Dendritic cell treated with granulocyte-macrophage colony-stimulating factor and Interleukin-4, amounts not matched to agents 40 ng/mL and 50 ng/mL, for 4 days (primary cell): ENCODE measurements at regions of chr2 and their contacts with region 1.

Region 1: DNA sequence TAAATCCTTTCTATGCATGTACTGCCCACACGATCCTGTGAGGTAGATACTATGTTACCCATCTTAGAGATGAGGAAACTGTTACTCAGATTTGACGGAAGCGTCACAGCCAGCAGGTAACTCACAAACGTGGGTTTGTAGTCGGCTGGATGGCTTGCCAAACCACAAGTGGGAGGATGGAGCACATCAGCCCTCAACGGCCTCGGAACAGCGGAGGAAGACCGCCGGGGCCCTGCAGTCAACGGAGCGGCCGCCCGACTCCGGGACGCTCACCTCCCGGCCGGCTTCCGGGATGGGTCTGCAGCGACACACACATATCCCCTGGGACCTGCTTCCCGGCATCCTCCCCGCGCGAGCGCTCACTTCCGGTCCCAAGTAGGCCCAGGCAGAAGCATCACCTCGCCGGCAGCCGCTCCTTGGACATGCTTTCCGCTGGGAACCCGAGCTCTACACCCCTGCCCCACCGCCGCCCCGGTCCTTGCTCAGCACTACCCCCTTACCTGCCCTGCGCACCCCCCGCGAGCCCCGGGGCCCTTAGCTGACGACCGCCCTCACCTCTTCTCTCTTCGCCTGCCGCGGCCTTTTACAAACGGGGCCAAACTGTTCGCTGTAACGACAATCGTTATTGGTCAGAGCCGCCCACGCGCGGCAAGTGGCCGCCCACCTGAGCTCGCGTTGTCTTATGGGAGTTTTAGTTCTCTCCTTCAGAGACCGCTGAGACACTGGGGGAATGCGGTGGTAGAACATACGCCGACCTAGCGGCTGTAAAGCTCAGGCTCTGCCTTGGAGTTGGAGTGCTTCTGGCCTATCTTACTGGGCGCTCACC is at the start of gene C2orf42:
- H3K4me3 Mint-ChIP-seq: peak within 1 kb of the TSS; percentile 87
- H3K27ac Mint-ChIP-seq: peak within 1 kb of the TSS; percentile 98
- H3K4me1 Mint-ChIP-seq: peaks cover 19% of the 10 kb centered on the region
- H3K27me3 Mint-ChIP-seq: no peaks in the 10 kb centered on the region

Region 2: DNA sequence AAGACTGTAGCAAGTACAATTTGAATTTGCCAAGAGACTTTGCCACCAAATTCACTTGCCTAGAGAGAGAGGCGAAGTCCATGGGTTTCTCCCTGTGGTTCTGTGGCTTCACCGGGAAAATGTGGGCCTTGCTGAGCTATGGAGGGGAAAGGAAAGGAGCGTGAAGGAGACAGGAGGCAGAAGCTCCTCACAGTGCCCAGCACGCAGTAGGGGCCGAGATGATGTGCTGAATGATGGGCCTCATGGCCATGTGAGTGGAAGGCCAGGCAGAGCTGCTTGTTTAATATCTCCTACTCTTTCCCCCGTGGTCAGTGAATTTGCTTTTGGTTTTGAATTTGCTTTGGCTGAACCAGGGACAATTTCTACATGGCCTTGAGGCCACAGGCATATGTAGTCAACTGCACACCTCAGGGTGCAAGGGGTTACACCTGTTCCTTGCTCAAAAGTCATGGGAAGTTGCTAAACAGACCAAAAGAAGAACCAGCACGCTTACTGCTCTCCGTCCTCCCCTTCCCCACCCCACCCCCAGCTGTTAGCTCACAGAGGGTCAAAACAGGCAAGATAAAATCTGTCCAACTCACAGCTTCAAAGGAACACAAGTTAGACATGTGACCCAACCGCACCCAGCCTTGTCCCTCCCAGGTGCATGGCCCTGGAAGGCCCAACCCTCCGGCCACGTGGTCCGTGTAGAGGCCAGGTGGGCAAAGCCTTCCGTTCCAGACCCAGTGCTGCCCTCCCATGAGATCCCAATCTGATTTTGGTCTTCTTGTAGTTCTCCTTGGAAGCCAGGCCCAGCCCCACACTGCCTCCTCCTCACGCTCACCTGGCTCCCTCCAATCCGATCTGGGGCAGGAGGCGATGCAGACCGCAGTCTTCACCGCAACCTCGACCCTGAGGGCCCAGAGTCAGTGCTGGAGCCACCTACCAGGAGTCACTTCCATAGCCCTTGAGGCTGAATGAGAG is 214.8 kb before region 1 on chr2:
- intact Hi-C with region 1: no loop called
- H3K4me3 Mint-ChIP-seq: no peak overlapping the region
- H3K27ac Mint-ChIP-seq: peak overlapping the region; percentile 43
- H3K4me1 Mint-ChIP-seq: peaks cover 56% of the 10 kb centered on the region
- H3K27me3 Mint-ChIP-seq: no peaks in the 10 kb centered on the region

Region 3: DNA sequence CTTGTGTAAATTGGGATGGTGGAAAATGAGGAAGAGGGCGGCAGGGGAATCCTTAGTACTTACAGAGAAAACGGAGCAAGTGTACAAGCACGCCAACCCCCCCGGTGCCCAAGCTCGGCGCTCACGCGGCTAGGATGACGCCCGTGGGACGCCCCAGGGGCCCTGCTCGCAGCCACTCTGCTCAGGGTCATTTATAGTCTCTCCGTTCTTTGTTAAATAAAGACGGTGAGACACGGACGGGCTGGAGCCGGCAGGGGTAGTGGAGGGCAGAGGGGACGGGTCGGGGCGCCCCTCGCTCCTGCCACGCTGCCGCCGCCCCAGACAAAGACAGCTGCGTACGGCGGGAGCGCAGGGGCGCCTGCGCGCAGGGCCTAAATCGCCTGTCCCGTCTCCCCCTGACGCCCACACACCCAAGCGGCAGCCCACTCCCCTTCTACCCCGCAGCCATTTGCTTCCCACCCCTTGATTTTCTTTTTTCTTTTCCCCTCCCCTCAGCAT is 65.6 kb before region 1 on chr2:
- intact Hi-C with region 1: loop called (anchors 2 kb)
- H3K4me3 Mint-ChIP-seq: peak overlapping the region; percentile 74
- H3K27ac Mint-ChIP-seq: peak overlapping the region; percentile 100
- H3K4me1 Mint-ChIP-seq: peaks cover 85% of the 10 kb centered on the region
- H3K27me3 Mint-ChIP-seq: no peaks in the 10 kb centered on the region